ENCODE measurements at regions of chr11 and their contacts with region 1.

Region 1: DNA sequence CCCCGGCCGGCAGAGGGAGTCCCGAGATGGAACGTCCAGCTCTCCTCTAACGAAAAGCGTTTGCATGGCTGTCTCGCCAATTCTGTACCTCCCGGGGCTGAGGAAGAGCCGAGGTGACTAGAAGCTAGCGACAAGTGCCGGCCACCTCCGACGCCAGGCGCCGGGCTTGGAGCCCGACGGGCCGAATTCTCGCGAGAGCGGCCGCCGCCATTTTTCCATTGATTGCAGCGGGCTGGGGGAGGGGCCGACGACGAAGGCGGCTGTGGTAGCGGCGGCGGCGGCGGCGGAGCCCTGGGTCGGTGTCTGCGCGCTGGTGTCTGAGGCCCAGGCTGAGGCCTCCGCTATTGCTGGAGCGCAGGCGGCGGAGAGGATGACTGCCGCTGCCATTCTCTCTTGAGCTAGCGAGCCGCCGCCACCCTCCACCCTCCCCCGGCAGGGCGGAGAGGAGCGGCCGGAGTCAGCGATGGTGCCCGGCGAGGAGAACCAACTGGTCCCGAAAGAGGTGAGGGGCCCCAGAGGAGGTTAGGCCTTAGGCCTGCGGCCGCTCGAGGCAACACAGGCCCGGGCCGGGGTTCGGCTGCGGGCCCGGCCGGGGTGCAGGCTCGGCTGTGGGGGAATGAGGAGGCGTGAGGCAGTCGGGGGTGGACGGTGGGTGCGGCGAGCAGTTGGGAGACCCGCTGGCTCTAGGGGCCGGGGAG is at the start of gene USP47:
- DNase-seq: peak; percentile 94
- ATAC-seq: peak; percentile 85
- H3K4me3 Mint-ChIP-seq: no peak within 1 kb of the TSS
- H3K27ac Mint-ChIP-seq: no peak within 1 kb of the TSS
- H3K4me1 Mint-ChIP-seq: peaks cover 6% of the 10 kb centered on the region
- H3K27me3 Mint-ChIP-seq: peaks cover 13% of the 10 kb centered on the region
- total RNA-seq, gene USP47: 34.5 to 38.4 TPM

Region 2: GRCh38 chr11:11798586-11799438 is 43.1 kb before region 1 on chr11:
- CTCF ChIA-PET with region 1: interaction called, 17 read pairs
- POLR2A ChIA-PET with region 1: no interaction called
- DNase-seq: peak; percentile 83
- ATAC-seq: peak; percentile 82
- H3K4me3 Mint-ChIP-seq: no peak overlapping the region
- H3K27ac Mint-ChIP-seq: no peak overlapping the region
- H3K4me1 Mint-ChIP-seq: no peaks in the 10 kb centered on the region
- H3K27me3 Mint-ChIP-seq: peaks cover 31% of the 10 kb centered on the region

Region 3: GRCh38 chr11:11827272-11827671 is 14.6 kb before region 1 on chr11:
- CTCF ChIA-PET with region 1: interaction called, 11 read pairs
- POLR2A ChIA-PET with region 1: no interaction called
- DNase-seq: no peak
- ATAC-seq: no peak
- H3K4me3 Mint-ChIP-seq: no peak overlapping the region
- H3K27ac Mint-ChIP-seq: no peak overlapping the region
- H3K4me1 Mint-ChIP-seq: no peaks in the 10 kb centered on the region
- H3K27me3 Mint-ChIP-seq: peaks cover 10% of the 10 kb centered on the region

Region 4: GRCh38 chr11:11856638-11857037 is 14.8 kb after region 1 on chr11:
- CTCF ChIA-PET with region 1: interaction called, 42 read pairs
- POLR2A ChIA-PET with region 1: interaction called, 13 read pairs
- DNase-seq: peak; percentile 57
- ATAC-seq: peak; percentile 79
- H3K4me3 Mint-ChIP-seq: no peak overlapping the region
- H3K27ac Mint-ChIP-seq: peak overlapping the region; percentile 27
- H3K4me1 Mint-ChIP-seq: peaks cover 41% of the 10 kb centered on the region
- H3K27me3 Mint-ChIP-seq: no peaks in the 10 kb centered on the region

Measured in activated CD8-positive, alpha-beta T cell treated with anti-CD3 and anti-CD28 coated beads, Interleukin-2, amount 10 ng/mL, durations not matched to agents 7 days and 5 days (primary cell).